ENCODE measurements at regions of chr18 and their contacts with region 1.

Region 1: GRCh38 chr18:45081566-45082181 is 401.0 kb downstream of the SETBP1 start:
- DNase-seq: no peak
- ATAC-seq: no peak
- H3K4me3 ChIP-seq: no peak overlapping the region
- H3K27ac ChIP-seq: no peak overlapping the region
- H3K4me1 ChIP-seq: no peaks in the 10 kb centered on the region
- H3K27me3 ChIP-seq: no peaks in the 10 kb centered on the region
- CTCF ChIP-seq: no peak

Region 2: DNA sequence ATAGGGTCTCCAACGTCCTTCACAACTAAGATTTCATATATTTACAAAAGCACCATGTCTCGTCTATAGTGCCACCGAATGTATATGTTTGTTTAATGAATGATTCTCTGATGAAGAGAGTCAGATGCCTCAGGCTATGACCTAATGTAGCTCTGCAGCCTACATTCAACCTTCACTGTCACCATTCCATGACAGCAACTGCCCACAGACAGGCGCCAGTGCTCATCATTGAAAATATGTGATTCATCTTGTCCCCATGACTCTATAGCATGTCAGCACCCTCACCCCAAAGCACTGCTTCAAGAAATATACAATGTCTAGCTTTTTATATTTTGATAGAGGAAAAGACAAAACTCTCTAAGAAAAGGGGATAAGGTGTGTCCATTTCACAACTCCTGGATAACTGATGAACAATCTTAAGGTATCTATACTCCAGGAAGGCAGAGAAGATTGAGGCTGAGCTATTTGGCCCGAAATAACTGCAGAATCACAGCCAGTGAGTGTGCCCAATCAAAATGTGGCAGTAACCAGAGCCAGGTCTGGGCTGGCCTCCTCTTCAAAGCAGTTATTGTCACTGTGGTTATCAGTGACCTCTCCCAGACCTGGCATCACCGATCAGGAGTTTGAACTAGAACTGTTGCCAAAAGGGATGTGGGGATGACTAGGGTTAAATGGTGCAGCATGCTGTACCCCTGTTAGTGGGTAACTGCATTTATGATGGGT is 154.4 kb before region 1 on chr18:
- intact Hi-C with region 1: no loop called
- DNase-seq: no peak
- ATAC-seq: peak; percentile 68 to 93 (median 82)
- H3K4me3 ChIP-seq: no peak overlapping the region
- H3K27ac ChIP-seq: peak overlapping the region; percentile 36
- H3K4me1 ChIP-seq: peaks cover 21% of the 10 kb centered on the region
- H3K27me3 ChIP-seq: no peaks in the 10 kb centered on the region
- CTCF ChIP-seq: no peak

Region 3: GRCh38 chr18:45108754-45109153 is 27.1 kb after region 1 on chr18:
- intact Hi-C with region 1: loop called in 1 of 2 experiments (anchors 1 kb)
- DNase-seq: no peak
- ATAC-seq: no peak
- H3K4me3 ChIP-seq: no peak overlapping the region
- H3K27ac ChIP-seq: no peak overlapping the region
- H3K4me1 ChIP-seq: no peaks in the 10 kb centered on the region
- H3K27me3 ChIP-seq: peaks cover 0 to 2% (median 0%) of the 10 kb centered on the region in 3 donors
- CTCF ChIP-seq: no peak

Region 4: DNA sequence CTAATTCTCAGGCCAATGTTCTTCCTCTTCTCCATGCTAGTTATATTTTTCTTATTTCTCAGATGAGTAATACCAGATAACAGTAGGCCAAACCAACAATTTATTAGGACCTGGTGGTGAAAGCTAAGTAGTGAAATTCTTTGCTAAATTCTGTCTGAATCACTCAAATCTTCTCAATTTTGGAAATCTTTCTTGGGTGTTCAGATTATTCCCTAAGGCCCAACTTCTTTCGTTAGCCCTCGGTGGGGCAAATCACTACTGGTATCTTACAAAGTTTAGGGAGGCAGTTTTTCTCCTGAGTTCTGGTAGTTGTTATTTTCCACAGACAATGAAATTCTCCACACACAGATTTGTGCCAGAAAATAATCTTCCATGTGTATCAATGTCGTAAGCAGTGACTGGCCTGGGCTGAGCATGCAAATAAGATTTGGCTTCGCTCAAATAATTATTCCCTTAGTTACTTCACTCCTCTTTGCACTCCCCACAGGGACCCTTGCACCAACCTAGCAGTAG is 90.1 kb after region 1 on chr18:
- intact Hi-C with region 1: no loop called
- DNase-seq: peak in 1 of 2 donors; percentile 19
- ATAC-seq: peak in 2 of 4 donors; percentile 7 to 34
- H3K4me3 ChIP-seq: no peak overlapping the region
- H3K27ac ChIP-seq: no peak overlapping the region
- H3K4me1 ChIP-seq: peaks cover 32% of the 10 kb centered on the region
- H3K27me3 ChIP-seq: no peaks in the 10 kb centered on the region
- CTCF ChIP-seq: no peak

Measured in psoas muscle (tissue), 8 donors.